Activated T-helper 2 cell treated with anti-CD3 and anti-CD28 coated beads, Interferon-gamma antibody, Interleukin-2, Interleukin-4, amounts not matched to agents 10 μg/mL and 5 μg/mL and 100 μg/mL, durations not matched to agents 14 hours and 24 hours and 36 hours (primary cell): ENCODE measurements at regions of chr9 and their contacts with region 1.

Region 1: DNA sequence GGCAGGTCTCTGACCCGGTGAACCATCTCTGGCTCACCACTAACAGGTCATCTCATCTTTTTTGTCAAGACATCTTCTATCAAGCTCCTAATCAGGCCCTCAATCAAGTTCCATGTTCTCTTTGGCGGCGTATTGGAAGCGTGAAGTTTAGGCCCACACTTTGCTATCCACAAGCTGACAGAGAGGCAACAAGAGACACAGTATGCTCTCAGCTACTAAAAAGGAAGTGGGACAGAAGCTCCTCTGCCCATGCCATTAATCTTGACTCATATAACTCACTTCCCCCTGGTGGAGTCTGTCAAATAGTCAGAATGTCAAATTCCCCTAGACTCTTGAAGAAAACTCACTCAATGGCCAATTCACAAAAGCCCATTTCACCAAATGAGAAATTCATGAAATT is 77.6 kb upstream of the TMC1 start:
- DNase-seq: peak; percentile 14
- H3K4me3 Mint-ChIP-seq: no peak overlapping the region
- H3K27ac Mint-ChIP-seq: peak overlapping the region; percentile 68
- H3K4me1 Mint-ChIP-seq: peaks cover 33% of the 10 kb centered on the region
- H3K27me3 Mint-ChIP-seq: peaks cover 12% of the 10 kb centered on the region

Region 2: GRCh38 chr9:72333709-72334108 is 110.1 kb before region 1 on chr9:
- intact Hi-C with region 1: no loop called
- DNase-seq: no peak
- H3K4me3 Mint-ChIP-seq: no peak overlapping the region
- H3K27ac Mint-ChIP-seq: no peak overlapping the region
- H3K4me1 Mint-ChIP-seq: no peaks in the 10 kb centered on the region
- H3K27me3 Mint-ChIP-seq: peaks cover 19% of the 10 kb centered on the region

Region 3: GRCh38 chr9:72349240-72349639 is 94.6 kb before region 1 on chr9:
- intact Hi-C with region 1: loop called (anchors 5 kb)
- DNase-seq: no peak
- H3K4me3 Mint-ChIP-seq: no peak overlapping the region
- H3K27ac Mint-ChIP-seq: no peak overlapping the region
- H3K4me1 Mint-ChIP-seq: peaks cover 18% of the 10 kb centered on the region
- H3K27me3 Mint-ChIP-seq: peaks cover 4% of the 10 kb centered on the region

Region 4: GRCh38 chr9:72428329-72428728 is 15.5 kb before region 1 on chr9:
- intact Hi-C with region 1: no loop called
- DNase-seq: no peak
- H3K4me3 Mint-ChIP-seq: no peak overlapping the region
- H3K27ac Mint-ChIP-seq: no peak overlapping the region
- H3K4me1 Mint-ChIP-seq: peaks cover 6% of the 10 kb centered on the region
- H3K27me3 Mint-ChIP-seq: peaks cover 20% of the 10 kb centered on the region

Region 5: GRCh38 chr9:72473474-72474261 is 29.8 kb after region 1 on chr9:
- intact Hi-C with region 1: loop called (anchors 1 kb)
- DNase-seq: no peak
- H3K4me3 Mint-ChIP-seq: no peak overlapping the region
- H3K27ac Mint-ChIP-seq: peak overlapping the region; percentile 77
- H3K4me1 Mint-ChIP-seq: peaks cover 33% of the 10 kb centered on the region
- H3K27me3 Mint-ChIP-seq: no peaks in the 10 kb centered on the region

Region 6: GRCh38 chr9:72526901-72527800 is 83.3 kb after region 1 on chr9:
- intact Hi-C with region 1: loop called (anchors 1 kb)
- DNase-seq: peak; percentile 61
- H3K4me3 Mint-ChIP-seq: peak overlapping the region; percentile 72
- H3K27ac Mint-ChIP-seq: peak overlapping the region; percentile 94
- H3K4me1 Mint-ChIP-seq: peaks cover 43% of the 10 kb centered on the region
- H3K27me3 Mint-ChIP-seq: no peaks in the 10 kb centered on the region

Region 7: DNA sequence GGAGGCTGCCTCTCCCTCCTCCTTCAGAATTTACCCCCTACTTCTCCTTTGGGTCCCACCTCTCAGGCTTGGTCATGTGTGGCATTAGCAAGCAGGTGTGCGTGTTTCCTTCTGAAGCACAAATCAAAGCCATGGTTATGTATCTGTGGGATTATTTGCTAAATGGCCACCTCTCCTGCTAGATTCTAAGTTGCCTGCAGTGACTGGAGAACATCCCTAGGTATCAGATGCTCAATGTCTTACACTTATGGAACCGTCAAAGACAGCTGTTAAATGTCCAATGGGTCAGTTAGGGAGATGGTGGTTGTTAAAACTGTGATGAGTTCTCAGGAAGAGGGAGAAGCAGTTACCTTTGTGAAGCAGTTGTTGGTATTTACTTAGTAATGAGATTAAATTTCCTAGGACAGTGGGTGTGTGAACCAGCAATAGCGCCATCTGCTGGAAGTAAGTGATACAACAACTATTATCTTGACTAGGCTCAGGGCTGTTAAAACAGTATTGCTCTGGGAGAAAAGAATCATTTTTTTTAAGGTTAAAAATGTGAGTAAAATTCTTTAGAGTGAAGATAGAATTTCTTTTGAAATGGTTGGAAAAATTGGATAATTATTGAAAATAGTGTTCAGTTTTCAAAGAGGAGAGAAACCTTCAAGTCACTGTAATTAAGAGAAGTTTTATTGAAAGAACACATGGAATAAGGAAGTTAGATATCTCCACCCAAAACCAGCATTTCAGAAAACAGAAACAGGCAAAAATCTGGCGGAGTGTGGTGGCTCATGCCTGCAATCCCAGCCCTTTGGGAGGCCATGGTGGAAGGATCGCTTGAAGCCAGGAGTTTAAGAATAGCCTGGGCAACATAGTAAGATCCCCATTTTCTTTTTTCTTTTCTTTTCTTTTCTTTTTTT is 148.9 kb after region 1 on chr9:
- intact Hi-C with region 1: loop called (anchors 2 kb)
- DNase-seq: no peak
- H3K4me3 Mint-ChIP-seq: no peak overlapping the region
- H3K27ac Mint-ChIP-seq: no peak overlapping the region
- H3K4me1 Mint-ChIP-seq: peaks cover 50% of the 10 kb centered on the region
- H3K27me3 Mint-ChIP-seq: peaks cover 8% of the 10 kb centered on the region